Transverse colon (tissue), 4 donors: ENCODE measurements at regions of chr16 and their contacts with region 1.

Region 1: DNA sequence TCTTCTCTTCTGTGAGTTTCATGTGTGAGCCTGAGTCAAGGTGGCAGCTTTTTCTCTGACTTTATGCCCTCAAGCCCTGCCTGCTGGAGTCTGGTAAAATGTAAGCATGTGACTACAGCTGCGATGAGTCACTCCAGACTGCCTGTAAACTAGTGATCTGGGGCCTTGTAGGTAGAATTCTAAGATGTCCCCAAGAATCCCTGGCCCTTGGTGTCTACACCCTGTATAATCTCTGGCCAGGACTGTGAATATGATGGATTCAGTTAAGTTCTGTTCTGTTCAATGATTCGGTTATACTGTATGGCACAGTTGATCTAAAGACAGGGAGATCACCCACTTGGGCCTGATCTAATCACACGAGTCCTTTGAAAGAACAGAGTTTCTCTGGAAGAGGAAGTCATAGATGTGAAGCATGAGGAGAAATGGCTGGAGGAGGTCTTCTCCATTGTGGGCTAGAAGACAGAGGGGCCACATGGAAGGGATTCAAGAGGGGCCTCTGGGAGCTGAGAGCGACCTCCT is 29.8 kb downstream of the PRSS54 start:
- DNase-seq: peak; percentile 44
- H3K4me3 ChIP-seq: no peak overlapping the region
- H3K27ac ChIP-seq: peak overlapping the region; percentile 61 to 71 (median 64)
- H3K4me1 ChIP-seq: peaks cover 5 to 37% (median 24%) of the 10 kb centered on the region in 4 donors
- H3K27me3 ChIP-seq: no peaks in the 10 kb centered on the region
- CTCF ChIP-seq: no peak
- EP300 ChIP-seq: no peak
- POLR2A ChIP-seq: no peak

Region 2: DNA sequence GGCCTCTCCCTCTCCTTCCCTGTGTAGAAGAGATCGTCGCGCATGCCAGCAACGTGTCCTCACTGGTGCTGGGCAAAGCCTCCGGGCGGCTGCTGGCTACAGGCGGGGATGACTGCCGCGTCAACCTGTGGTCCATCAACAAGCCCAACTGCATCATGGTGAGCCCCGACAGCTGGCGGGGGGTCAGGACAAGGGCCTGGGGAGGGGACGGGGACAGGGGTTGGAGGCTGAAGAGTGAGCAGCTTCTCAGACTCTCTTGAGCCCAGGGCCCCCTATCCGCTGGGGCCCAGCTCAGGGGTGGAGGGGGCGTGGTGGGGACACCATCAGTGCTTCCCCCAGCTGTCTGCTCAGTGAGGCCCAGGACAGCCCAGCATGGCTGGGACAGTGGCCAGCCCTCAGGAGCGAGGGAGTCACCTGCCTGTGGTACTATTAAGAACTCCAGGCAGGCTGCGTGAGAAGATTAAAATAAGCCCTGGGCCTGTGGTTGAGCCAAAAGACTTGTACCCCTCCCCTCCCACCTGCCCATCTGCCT is 523.3 kb before region 1 on chr16:
- in situ Hi-C with region 1: no loop called
- intact Hi-C with region 1: loop called (anchors 5 kb)
- DNase-seq: no peak
- H3K4me3 ChIP-seq: no peak overlapping the region
- H3K27ac ChIP-seq: no peak overlapping the region
- H3K4me1 ChIP-seq: peaks cover 4 to 6% (median 5%) of the 10 kb centered on the region in 4 donors
- H3K27me3 ChIP-seq: no peaks in the 10 kb centered on the region
- CTCF ChIP-seq: no peak
- EP300 ChIP-seq: no peak
- POLR2A ChIP-seq: no peak

Region 3: GRCh38 chr16:58127033-58127556 is 137.9 kb before region 1 on chr16:
- in situ Hi-C with region 1: no loop called
- intact Hi-C with region 1: no loop called
- DNase-seq: no peak
- H3K4me3 ChIP-seq: peak overlapping the region in 1 of 4 donors; percentile 86
- H3K27ac ChIP-seq: peak overlapping the region; percentile 90 to 96 (median 92)
- H3K4me1 ChIP-seq: peaks cover 34 to 54% (median 38%) of the 10 kb centered on the region in 4 donors
- H3K27me3 ChIP-seq: no peaks in the 10 kb centered on the region
- CTCF ChIP-seq: peak in 4 of 5 experiments; percentile 27 to 36 (median 30)
- EP300 ChIP-seq: no peak
- POLR2A ChIP-seq: no peak